ENCODE measurements at regions of chr6 and their contacts with region 1.

Region 1: DNA sequence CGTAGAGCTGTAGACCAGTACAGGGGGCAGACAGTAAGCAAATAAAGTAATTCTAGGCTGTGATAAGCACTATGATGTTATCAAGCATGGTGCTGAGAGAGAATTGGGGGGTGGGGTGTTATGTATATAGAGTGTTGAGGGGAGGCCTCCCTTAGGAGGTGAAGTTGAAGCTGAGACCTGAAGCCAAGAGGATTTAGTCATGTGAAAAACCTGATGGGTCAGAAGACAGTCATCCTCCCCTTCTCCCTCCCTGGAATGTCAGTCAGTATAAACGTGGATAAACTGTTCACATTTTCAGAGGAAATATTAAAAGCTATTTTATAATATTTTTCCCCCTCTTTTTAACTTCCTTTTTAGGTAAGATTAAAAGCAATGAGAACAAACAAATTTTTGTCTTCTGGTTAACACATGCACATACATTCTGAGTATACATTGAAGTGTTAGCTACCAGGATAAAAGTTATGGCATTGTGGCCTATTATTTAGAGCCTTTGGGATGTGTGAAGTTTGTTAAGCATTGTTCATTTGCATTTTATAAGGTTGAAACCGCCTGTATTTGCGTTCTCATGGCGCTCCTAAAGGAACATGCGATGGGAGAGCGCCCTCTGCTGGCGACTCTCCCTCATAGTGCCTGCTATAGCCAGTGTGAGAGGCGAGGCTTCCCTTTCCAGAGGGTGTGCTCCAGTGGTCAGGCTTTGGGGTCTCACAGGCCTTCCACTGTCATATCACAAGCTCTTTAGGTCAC is 35.4 kb upstream of the MAPK13 start:
- DNase-seq: peak; percentile 50 to 86
- H3K4me3 ChIP-seq: no peak overlapping the region
- H3K27ac ChIP-seq: no peak overlapping the region
- H3K4me1 ChIP-seq: peaks cover 0 to 4% (median 0%) of the 10 kb centered on the region in 4 experiments; a peak in 1 of 7 replicates
- H3K27me3 ChIP-seq: no peaks in the 10 kb centered on the region
- CTCF ChIP-seq: peak; percentile 87 to 95 (median 94)
- EP300 ChIP-seq: no peak
- POLR2A ChIP-seq: no peak
- RAD21 ChIP-seq: peak; percentile 95 to 96

Region 2: DNA sequence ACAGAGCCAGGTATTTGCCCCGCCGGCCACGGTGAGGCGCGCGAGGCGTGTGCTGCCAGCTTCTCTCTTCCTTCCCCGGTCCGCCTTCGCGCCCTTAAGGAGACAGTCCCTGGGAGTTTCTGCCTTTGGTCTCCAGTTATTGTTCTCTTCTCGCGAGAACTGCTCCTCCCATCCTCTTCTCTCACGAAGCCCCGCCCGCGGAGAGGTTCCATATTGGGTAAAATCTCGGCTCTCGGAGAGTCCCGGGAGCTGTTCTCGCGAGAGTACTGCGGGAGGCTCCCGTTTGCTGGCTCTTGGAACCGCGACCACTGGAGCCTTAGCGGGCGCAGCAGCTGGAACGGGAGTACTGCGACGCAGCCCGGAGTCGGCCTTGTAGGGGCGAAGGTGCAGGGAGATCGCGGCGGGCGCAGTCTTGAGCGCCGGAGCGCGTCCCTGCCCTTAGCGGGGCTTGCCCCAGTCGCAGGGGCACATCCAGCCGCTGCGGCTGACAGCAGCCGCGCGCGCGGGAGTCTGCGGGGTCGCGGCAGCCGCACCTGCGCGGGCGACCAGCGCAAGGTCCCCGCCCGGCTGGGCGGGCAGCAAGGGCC is 67.3 kb before region 1 on chr6 and contains the start of gene MAPK14:
- CTCF ChIA-PET with region 1: interaction called, 57 read pairs
- POLR2A ChIA-PET with region 1: interaction called, 13 read pairs
- DNase-seq: peak; percentile 97 to 98
- H3K4me3 ChIP-seq: peak within 1 kb of the TSS; percentile 91 to 95 (median 93)
- H3K27ac ChIP-seq: peak within 1 kb of the TSS; percentile 67; the same call in 1 of the 2 replicates
- H3K4me1 ChIP-seq: peaks cover 0 to 19% (median 13%) of the 10 kb centered on the region in 4 experiments; a peak in 5 of 7 replicates
- H3K27me3 ChIP-seq: no peaks in the 10 kb centered on the region
- CTCF ChIP-seq: peak; percentile 68 to 88 (median 86)
- EP300 ChIP-seq: no peak
- POLR2A ChIP-seq: peak; percentile 89 to 94
- RAD21 ChIP-seq: peak; percentile 79 to 81
- total RNA-seq, gene MAPK14: 33.2 and 39.3 TPM in 2 replicates

Region 3: GRCh38 chr6:36073587-36073986 is 21.3 kb before region 1 on chr6:
- CTCF ChIA-PET with region 1: interaction called, 13 read pairs
- POLR2A ChIA-PET with region 1: no interaction called
- DNase-seq: no peak
- H3K4me3 ChIP-seq: no peak overlapping the region
- H3K27ac ChIP-seq: no peak overlapping the region
- H3K4me1 ChIP-seq: no peaks in the 10 kb centered on the region
- H3K27me3 ChIP-seq: no peaks in the 10 kb centered on the region
- CTCF ChIP-seq: no peak
- EP300 ChIP-seq: no peak
- POLR2A ChIP-seq: no peak
- RAD21 ChIP-seq: no peak

Region 4: DNA sequence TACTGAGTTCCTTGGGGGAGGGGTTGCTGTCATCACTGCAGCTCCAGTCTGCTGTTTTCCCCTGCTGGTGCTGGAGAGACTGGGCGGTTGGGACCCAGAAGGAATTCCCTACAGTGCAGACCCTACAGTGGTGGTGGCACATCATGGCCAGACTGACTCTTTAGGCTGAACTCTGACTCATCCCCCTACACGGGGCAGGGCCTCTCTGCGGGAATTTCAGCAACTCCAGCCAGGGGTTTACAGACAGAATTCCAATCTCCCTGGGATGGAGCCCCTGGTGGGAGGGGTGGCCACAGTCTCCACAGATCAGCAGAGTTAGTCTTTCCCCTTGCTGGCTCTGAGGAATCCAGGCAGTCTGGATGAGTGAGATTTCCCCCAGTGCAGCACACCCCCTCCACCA is 11.5 kb before region 1 on chr6:
- CTCF ChIA-PET with region 1: interaction called, 51 read pairs
- POLR2A ChIA-PET with region 1: no interaction called
- DNase-seq: no peak
- H3K4me3 ChIP-seq: no peak overlapping the region
- H3K27ac ChIP-seq: no peak overlapping the region
- H3K4me1 ChIP-seq: no peaks in the 10 kb centered on the region
- H3K27me3 ChIP-seq: no peaks in the 10 kb centered on the region
- CTCF ChIP-seq: no peak
- EP300 ChIP-seq: no peak
- POLR2A ChIP-seq: no peak
- RAD21 ChIP-seq: no peak

Region 5: GRCh38 chr6:36153972-36154723 is 59.2 kb after region 1 on chr6:
- CTCF ChIA-PET with region 1: no interaction called
- POLR2A ChIA-PET with region 1: no interaction called
- DNase-seq: no peak
- H3K4me3 ChIP-seq: no peak overlapping the region
- H3K27ac ChIP-seq: no peak overlapping the region
- H3K4me1 ChIP-seq: no peaks in the 10 kb centered on the region
- H3K27me3 ChIP-seq: no peaks in the 10 kb centered on the region
- CTCF ChIP-seq: no peak
- EP300 ChIP-seq: no peak
- POLR2A ChIP-seq: no peak
- RAD21 ChIP-seq: no peak

Region 6: GRCh38 chr6:36196880-36197548 is 102.1 kb after region 1 on chr6:
- CTCF ChIA-PET with region 1: interaction called, 12 read pairs
- POLR2A ChIA-PET with region 1: interaction called, 3 read pairs
- DNase-seq: peak; percentile 96 to 100
- H3K4me3 ChIP-seq: peak overlapping the region; percentile 64 to 88 (median 66)
- H3K27ac ChIP-seq: peak overlapping the region; percentile 86; the same call in 1 of the 2 replicates
- H3K4me1 ChIP-seq: peaks cover 0 to 6% (median 1%) of the 10 kb centered on the region in 4 experiments; a peak in 4 of 7 replicates
- H3K27me3 ChIP-seq: no peaks in the 10 kb centered on the region
- CTCF ChIP-seq: no peak
- EP300 ChIP-seq: no peak
- POLR2A ChIP-seq: peak; percentile 66 to 93
- RAD21 ChIP-seq: no peak